Heart right ventricle (tissue), 16 donors: ENCODE measurements at regions of chr15 and their contacts with region 1.

Region 1: GRCh38 chr15:99928429-99928981 is 195.3 kb upstream of the LYSMD4 start:
- DNase-seq: peak; percentile 81 to 91
- ATAC-seq: peak; percentile 79 to 96 (median 94)
- H3K4me3 ChIP-seq: peak overlapping the region in 9 of 10 donors; percentile 21 to 58 (median 48)
- H3K27ac ChIP-seq: peak overlapping the region in 9 of 10 donors; percentile 31 to 80 (median 68)
- H3K4me1 ChIP-seq: peaks cover 2 to 15% (median 10%) of the 10 kb centered on the region in 9 donors
- H3K27me3 ChIP-seq: no peaks in the 10 kb centered on the region
- CTCF ChIP-seq: peak; percentile 65 to 80 (median 72)

Region 2: GRCh38 chr15:99578809-99579208 is 349.7 kb before region 1 on chr15:
- intact Hi-C with region 1: no loop called
- DNase-seq: no peak
- ATAC-seq: no peak
- H3K4me3 ChIP-seq: no peak overlapping the region
- H3K27ac ChIP-seq: peak overlapping the region in 1 of 10 donors; percentile 14
- H3K4me1 ChIP-seq: peaks cover 8 to 99% (median 63%) of the 10 kb centered on the region in 9 donors
- H3K27me3 ChIP-seq: no peaks in the 10 kb centered on the region
- CTCF ChIP-seq: no peak

Region 3: DNA sequence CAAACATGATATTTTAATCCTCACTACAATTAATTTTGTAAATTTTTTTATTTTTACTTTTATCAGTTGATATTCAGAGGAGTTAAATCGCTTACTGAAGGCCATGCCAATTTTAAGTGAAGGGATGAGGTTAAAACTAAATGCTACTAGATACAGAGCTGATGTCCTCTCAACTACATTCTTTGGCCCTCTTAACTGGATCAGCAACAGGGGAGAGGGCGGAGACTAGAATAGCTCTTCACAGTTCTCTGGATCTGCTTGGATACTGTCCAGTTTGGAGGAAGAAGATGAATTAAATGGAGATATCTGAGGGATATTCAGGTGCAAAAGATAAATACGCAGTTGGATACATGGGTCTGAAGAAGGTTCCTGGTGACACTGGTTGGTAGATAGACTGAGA is 109.6 kb before region 1 on chr15:
- intact Hi-C with region 1: loop called in 1 of 10 experiments (anchors 10 kb)
- DNase-seq: no peak
- ATAC-seq: peak in 4 of 8 donors; percentile 47 to 85 (median 64)
- H3K4me3 ChIP-seq: no peak overlapping the region
- H3K27ac ChIP-seq: no peak overlapping the region
- H3K4me1 ChIP-seq: peaks cover 0 to 22% (median 0%) of the 10 kb centered on the region in 9 donors
- H3K27me3 ChIP-seq: no peaks in the 10 kb centered on the region
- CTCF ChIP-seq: no peak

Region 4: GRCh38 chr15:100125401-100126191 is 197.1 kb after region 1 on chr15:
- intact Hi-C with region 1: loop called in 2 of 10 experiments (anchors 10 kb)
- DNase-seq: peak; percentile 39 to 74
- ATAC-seq: peak; percentile 76 to 93 (median 86)
- H3K4me3 ChIP-seq: no peak overlapping the region
- H3K27ac ChIP-seq: peak overlapping the region in 7 of 10 donors; percentile 25 to 55 (median 41)
- H3K4me1 ChIP-seq: peaks cover 0 to 14% (median 4%) of the 10 kb centered on the region in 9 donors
- H3K27me3 ChIP-seq: no peaks in the 10 kb centered on the region
- CTCF ChIP-seq: no peak

Region 5: DNA sequence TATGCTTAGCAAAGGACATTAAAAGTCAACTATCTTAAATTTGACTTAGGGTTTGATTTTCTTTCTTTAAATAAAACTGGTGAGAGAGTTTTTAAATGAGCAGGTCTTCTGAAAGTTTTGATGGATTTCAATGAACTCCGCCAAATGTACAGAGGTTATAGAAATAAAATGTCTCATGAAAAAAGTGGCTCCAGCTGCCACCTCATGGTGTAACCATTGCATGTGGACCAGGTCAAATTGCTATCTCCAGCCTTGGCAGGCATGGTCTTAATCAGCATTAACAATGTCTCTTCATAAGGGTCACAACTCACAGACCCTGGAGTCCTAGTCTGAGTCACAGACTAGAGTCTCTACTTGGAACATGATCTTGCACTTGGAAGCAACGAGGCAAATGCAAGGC is 230.9 kb after region 1 on chr15:
- intact Hi-C with region 1: loop called in 2 of 10 experiments (anchors 10 kb)
- DNase-seq: no peak
- ATAC-seq: no peak
- H3K4me3 ChIP-seq: no peak overlapping the region
- H3K27ac ChIP-seq: no peak overlapping the region
- H3K4me1 ChIP-seq: no peaks in the 10 kb centered on the region
- H3K27me3 ChIP-seq: no peaks in the 10 kb centered on the region
- CTCF ChIP-seq: peak in 5 of 9 donors; percentile 9 to 46 (median 27)

Region 6: GRCh38 chr15:100349696-100350433 is 421.4 kb after region 1 on chr15:
- intact Hi-C with region 1: loop called in 2 of 10 experiments (anchors 5 to 10 kb)
- DNase-seq: peak; percentile 93
- ATAC-seq: peak; percentile 95 to 98 (median 98)
- H3K4me3 ChIP-seq: peak overlapping the region; percentile 38 to 90 (median 77)
- H3K27ac ChIP-seq: peak overlapping the region; percentile 64 to 99 (median 94)
- H3K4me1 ChIP-seq: peaks cover 0 to 15% (median 5%) of the 10 kb centered on the region in 9 donors
- H3K27me3 ChIP-seq: peaks cover 0 to 15% (median 11%) of the 10 kb centered on the region in 7 donors
- CTCF ChIP-seq: peak; percentile 78 to 93 (median 81)

Region 7: DNA sequence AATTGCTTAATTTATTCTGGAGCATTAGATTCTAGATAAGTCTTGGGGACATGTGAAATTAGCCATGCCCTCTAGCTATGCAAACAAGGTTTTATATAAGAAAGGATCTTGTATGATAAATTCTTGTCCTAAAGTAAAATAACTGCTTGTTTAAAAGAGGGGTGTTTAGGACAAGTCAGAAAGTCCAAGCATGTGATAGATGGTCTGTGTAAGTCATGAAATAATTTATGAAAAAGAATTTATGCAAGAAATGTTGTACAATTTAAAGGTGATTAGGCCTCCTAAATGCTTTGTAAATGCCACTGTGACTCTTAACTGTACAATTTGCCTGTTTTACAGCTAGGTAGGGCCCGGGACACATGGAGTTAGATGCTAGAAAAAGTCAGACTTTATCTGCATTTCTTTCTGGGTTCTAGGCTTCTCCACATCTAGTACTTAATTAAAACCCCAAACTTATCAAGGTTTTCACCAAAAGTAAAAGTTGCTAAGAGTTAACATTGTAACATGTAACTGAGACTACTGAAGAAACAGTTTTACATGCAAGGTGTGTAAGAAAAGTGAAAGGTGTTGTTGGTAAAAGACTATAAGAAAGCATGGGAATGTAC is 660.2 kb after region 1 on chr15:
- intact Hi-C with region 1: loop called in 1 of 10 experiments (anchors 10 kb)
- DNase-seq: no peak
- ATAC-seq: no peak
- H3K4me3 ChIP-seq: no peak overlapping the region
- H3K27ac ChIP-seq: no peak overlapping the region
- H3K4me1 ChIP-seq: peaks cover 0 to 6% (median 0%) of the 10 kb centered on the region in 9 donors
- H3K27me3 ChIP-seq: no peaks in the 10 kb centered on the region
- CTCF ChIP-seq: no peak